Testis (tissue), 5 donors: ENCODE measurements at regions of chr6 and their contacts with region 1.

Region 1: DNA sequence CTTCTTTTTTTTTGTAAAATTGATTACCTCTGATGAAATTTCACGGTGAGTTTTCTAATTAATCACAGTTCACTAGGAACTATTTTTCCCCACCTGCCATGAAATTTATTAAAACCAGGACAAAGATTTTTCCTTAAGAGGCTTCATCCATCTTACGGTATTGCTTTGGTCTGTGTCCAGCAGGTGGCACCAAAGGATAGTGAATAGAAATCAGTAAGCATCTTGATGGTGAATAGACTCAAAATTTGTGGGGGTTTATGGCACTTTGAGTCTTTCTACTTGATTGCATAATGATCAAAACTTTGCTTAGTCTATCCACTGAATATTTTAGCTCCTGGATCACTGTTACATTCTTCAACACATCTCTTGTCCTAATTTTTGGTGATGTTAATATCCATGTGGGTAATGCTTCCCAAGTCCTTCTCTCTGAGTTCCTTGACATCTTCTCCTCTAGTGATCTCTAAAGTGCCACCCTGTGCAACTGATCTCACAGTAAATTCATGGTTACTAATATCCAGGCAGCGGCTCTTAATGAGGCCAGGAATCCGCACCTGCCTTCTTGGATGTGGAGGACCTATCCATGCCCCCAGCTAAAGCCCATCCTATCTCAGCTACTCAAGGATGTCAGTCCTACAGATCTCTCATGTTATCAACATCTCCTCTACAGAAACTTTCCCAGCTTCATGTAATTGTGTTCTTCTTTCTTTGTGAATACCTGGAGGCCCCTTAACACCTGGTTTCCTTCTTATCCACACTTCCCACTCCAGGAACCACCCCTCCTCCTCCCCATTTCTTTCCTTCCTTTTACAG is 54.5 kb downstream of the STMND1 start:
- DNase-seq: peak; percentile 88
- H3K4me3 ChIP-seq: no peak overlapping the region
- H3K27ac ChIP-seq: no peak overlapping the region
- H3K4me1 ChIP-seq: no peaks in the 10 kb centered on the region
- H3K27me3 ChIP-seq: no peaks in the 10 kb centered on the region
- CTCF ChIP-seq: peak; percentile 70 to 74 (median 71)
- POLR2A ChIP-seq: no peak

Region 2: GRCh38 chr6:17584241-17584803 is 428.0 kb after region 1 on chr6:
- intact Hi-C with region 1: loop called (anchors 10 kb)
- DNase-seq: peak; percentile 38
- H3K4me3 ChIP-seq: no peak overlapping the region
- H3K27ac ChIP-seq: peak overlapping the region in 1 of 2 donors; percentile 34
- H3K4me1 ChIP-seq: peaks cover 3% of the 10 kb centered on the region
- H3K27me3 ChIP-seq: no peaks in the 10 kb centered on the region
- CTCF ChIP-seq: peak; percentile 79 to 84 (median 82)
- POLR2A ChIP-seq: no peak

Region 3: DNA sequence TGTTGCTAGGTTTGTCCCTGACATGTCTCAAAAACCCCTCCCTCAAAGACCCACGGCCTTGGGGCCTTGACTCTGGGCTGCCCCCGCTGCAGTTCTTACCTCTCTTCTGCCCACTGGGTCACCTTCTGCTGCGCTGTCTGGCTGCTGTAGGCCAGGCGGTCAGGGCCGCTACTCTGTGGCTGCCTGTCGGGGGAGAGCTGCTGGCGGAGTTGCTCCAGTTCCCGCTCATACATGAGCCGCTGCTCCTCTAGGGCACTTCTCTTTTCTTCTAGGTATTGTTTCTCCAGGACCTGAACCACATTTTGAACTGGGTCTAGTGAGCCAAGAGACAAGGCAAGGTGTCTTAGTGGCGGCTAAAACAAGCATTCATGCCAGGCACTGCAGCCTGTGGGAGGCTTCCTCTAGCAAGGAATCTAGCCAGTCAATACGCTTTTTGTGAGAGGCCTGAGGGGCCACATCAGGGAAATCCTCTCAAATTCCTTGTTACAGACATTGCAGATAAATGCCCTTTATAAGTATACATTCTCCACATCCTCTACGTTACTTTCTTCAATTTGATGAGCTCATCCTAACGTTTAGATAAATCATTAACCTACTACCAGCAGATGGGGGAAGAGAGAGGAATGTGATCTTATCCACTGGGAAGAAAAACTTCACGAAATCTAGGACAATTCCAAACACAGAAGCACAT is 660.7 kb after region 1 on chr6:
- intact Hi-C with region 1: loop called (anchors 10 kb)
- DNase-seq: no peak
- H3K4me3 ChIP-seq: no peak overlapping the region
- H3K27ac ChIP-seq: no peak overlapping the region
- H3K4me1 ChIP-seq: no peaks in the 10 kb centered on the region
- H3K27me3 ChIP-seq: no peaks in the 10 kb centered on the region
- CTCF ChIP-seq: peak in 1 of 3 experiments; percentile 4
- POLR2A ChIP-seq: no peak